IMR-90 (cell line): ENCODE measurements at regions of chr20 and their contacts with region 1.

Region 1: DNA sequence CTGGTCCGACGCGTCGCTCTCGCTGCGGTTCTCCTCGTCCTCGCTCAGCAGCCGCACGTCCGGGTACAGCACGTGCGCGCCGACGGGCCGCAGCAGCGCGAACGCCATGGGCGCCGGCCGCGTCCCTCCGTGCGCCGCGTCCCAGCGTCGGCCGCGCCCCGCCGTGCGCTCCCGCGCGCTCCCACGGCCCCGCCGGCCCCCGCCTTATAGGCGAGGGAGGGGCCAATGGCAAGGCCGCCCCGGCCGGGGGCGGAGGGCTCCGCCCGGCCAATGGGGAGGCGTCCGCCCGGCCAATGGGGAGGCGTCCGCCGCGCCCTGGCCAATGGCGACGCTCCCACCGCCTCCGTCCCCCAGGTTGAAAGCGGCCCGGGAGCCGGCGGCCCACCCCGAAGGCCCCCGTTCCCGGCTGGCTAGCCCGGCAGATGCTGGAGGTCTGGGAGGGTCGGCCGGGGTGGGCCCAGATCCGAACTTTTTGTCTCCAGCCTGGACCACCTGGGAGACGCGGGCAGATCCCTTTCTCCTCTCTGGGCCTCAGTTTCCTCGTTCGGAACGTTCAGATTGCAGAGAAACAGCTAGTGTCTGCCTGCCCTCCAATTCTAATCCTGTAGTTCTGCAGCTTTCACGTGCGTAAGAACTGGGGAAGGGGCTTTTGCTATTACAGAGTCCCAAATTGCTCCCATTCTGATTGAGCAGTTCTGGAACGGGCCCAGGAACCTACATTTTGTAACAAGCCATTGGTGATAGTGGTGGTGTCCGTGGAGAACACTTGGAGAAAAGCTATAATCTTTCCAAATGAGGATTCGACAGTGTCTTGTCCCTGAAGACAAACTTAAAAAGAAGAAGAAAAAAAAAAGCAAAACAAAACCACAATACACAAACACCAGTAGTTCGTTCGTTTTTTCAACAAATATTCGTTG is at the start of gene TCF15:
- DNase-seq: no peak
- ATAC-seq: peak; percentile 48
- H3K4me3 ChIP-seq: no peak within 1 kb of the TSS
- H3K27ac ChIP-seq: no peak within 1 kb of the TSS
- H3K4me1 ChIP-seq: no peaks in the 10 kb centered on the region
- H3K27me3 ChIP-seq: peaks cover 82% of the 10 kb centered on the region
- CTCF ChIP-seq: no peak
- POLR2A ChIP-seq: no peak
- RAD21 ChIP-seq: no peak
- total RNA-seq, gene TCF15: not detected in 2 replicates

Region 2: DNA sequence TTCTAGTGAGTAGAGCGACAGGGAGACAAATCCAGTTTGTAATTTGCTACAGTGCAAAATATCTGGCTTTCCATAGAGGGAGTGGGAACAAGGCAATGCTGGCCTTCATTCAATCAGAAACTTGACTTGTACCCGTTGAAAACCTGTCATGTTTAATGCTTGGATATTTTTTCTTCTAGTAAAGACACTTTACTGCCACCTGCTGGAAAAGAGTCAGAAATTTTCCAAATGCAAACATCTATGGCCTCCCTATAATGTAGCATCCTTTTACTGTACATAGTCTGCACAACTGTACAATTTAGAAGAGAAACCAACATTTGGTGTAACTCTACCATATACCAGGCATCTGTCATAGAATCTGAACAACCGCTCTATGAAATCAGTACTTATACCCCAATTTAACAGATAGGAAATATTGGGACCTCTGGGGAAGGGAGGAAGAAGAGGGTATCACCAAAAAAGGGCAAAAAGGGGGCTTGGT is 131.4 kb before region 1 on chr20:
- CTCF ChIA-PET with region 1: no interaction called
- POLR2A ChIA-PET with region 1: no interaction called
- dilution Hi-C with region 1: no loop called
- in situ Hi-C with region 1: no loop called
- intact Hi-C with region 1: no loop called
- DNase-seq: peak; percentile 77
- ATAC-seq: peak; percentile 69
- H3K4me3 ChIP-seq: no peak overlapping the region
- H3K27ac ChIP-seq: no peak overlapping the region
- H3K4me1 ChIP-seq: peaks cover 10% of the 10 kb centered on the region
- H3K27me3 ChIP-seq: no peaks in the 10 kb centered on the region
- CTCF ChIP-seq: peak; percentile 60
- POLR2A ChIP-seq: no peak
- RAD21 ChIP-seq: peak; percentile 55

Region 3: DNA sequence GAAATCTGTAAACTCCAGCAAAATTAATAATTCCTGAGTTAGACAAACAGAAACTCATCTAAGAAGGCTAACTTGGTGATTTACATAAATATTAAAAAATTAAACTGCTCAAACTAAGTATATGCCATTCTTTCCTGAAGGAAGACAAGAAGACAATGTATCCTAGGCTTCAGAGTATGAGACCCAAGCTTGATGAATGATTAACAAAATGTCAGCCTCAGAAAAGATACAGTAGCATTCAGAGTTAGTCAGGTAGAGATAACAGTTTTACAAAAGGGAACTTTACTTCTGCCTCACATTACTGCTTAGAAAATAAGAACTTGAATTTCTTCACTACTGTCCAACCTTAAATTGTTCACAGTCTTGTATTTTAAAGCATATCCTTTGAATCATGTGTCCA is 78.8 kb before region 1 on chr20:
- CTCF ChIA-PET with region 1: no interaction called
- POLR2A ChIA-PET with region 1: interaction called, 14 read pairs
- dilution Hi-C with region 1: no loop called
- in situ Hi-C with region 1: no loop called
- intact Hi-C with region 1: no loop called
- DNase-seq: no peak
- ATAC-seq: no peak
- H3K4me3 ChIP-seq: no peak overlapping the region
- H3K27ac ChIP-seq: no peak overlapping the region
- H3K4me1 ChIP-seq: peaks cover 4% of the 10 kb centered on the region
- H3K27me3 ChIP-seq: no peaks in the 10 kb centered on the region
- CTCF ChIP-seq: no peak
- POLR2A ChIP-seq: no peak
- RAD21 ChIP-seq: no peak

Region 4: DNA sequence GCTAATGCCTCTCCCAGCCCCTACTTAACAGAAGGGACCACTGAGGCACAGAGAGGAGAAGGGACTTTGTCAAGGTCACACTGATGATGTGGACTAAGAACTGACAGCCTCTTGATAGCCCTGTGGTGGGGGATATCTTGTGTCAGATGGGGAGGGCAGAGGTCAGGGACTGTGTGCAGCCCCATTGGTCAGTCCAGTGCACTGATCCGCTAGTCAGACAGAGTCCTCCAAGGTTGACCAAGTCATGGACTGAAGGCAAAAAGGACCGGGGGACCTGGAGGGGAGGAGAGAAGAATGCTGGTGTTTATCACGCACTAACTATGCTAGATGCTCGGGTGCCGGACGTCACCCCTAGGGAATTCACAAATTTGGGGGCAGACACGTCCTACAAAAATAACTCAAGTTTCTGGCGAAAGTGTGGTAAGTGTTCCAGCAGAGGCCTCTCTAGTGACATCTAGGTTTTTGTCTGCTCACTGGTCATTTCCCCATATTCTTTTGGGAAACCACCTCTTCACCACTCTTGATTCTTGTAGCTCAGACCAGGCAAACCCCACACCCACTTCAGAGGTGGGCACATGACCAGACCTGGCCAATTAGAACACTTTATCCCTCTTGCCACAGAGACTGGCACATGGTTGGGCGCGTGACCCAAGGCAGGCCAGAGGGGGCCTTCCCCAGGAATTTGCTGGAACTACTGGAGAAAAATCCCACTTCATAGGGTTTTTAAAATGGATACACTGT is 21.3 kb before region 1 on chr20:
- CTCF ChIA-PET with region 1: no interaction called
- POLR2A ChIA-PET with region 1: interaction called, 20 read pairs
- dilution Hi-C with region 1: no loop called
- in situ Hi-C with region 1: no loop called
- intact Hi-C with region 1: no loop called
- DNase-seq: no peak
- ATAC-seq: no peak
- H3K4me3 ChIP-seq: no peak overlapping the region
- H3K27ac ChIP-seq: no peak overlapping the region
- H3K4me1 ChIP-seq: no peaks in the 10 kb centered on the region
- H3K27me3 ChIP-seq: peaks cover 9% of the 10 kb centered on the region
- CTCF ChIP-seq: no peak
- POLR2A ChIP-seq: no peak
- RAD21 ChIP-seq: no peak